Activated CD4-positive, alpha-beta memory T cell treated with anti-CD3 and anti-CD28 coated beads for 36 hours (primary cell): ENCODE measurements at regions of chr15 and their contacts with region 1.

Region 1: GRCh38 chr15:77974098-77974414 is 103.5 kb downstream of the TBC1D2B start:
- DNase-seq: no peak
- H3K4me3 Mint-ChIP-seq: no peak overlapping the region
- H3K27ac Mint-ChIP-seq: no peak overlapping the region
- H3K4me1 Mint-ChIP-seq: no peaks in the 10 kb centered on the region
- H3K27me3 Mint-ChIP-seq: no peaks in the 10 kb centered on the region

Region 2: DNA sequence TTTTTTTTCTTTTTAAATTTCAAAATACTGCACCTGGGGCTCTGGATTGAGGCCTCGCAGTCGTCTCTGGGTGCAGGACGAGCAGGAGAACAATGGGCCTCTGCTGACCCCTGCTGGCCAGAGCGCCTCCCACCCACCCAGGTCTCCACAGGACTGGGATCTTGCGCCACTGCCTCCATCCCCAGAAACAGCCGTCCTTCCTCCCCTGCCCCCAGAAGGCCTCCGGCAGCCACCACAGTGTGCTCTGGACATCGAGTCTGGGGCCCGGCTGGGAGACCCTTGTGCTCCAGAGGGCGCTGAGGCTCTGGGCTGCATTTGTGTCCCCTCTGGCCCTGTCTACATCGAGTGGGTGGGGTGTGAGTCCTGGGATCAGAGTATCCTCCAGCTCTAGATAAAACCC is 267.0 kb after region 1 on chr15:
- CTCF ChIA-PET with region 1: no interaction called
- POLR2A ChIA-PET with region 1: no interaction called
- intact Hi-C with region 1: no loop called
- DNase-seq: peak; percentile 91
- H3K4me3 Mint-ChIP-seq: no peak overlapping the region
- H3K27ac Mint-ChIP-seq: no peak overlapping the region
- H3K4me1 Mint-ChIP-seq: peaks cover 2% of the 10 kb centered on the region
- H3K27me3 Mint-ChIP-seq: peaks cover 1% of the 10 kb centered on the region

Region 3: GRCh38 chr15:78778422-78778821 is 804.4 kb after region 1 on chr15:
- CTCF ChIA-PET with region 1: interaction called, 3 read pairs
- POLR2A ChIA-PET with region 1: no interaction called
- intact Hi-C with region 1: loop called (anchors 10 kb)
- DNase-seq: no peak
- H3K4me3 Mint-ChIP-seq: no peak overlapping the region
- H3K27ac Mint-ChIP-seq: no peak overlapping the region
- H3K4me1 Mint-ChIP-seq: no peaks in the 10 kb centered on the region
- H3K27me3 Mint-ChIP-seq: peaks cover 3% of the 10 kb centered on the region